Activated naive CD8-positive, alpha-beta T cell treated with anti-CD3 and anti-CD28 coated beads, Interleukin-2, amount 10 ng/mL, durations not matched to agents 7 days and 5 days (primary cell): ENCODE measurements at regions of chr9 and their contacts with region 1.

Region 1: GRCh38 chr9:131277910-131278701 is 1.8 kb upstream of the FAM78A start:
- DNase-seq: peak; percentile 71
- ATAC-seq: peak; percentile 44
- H3K4me3 Mint-ChIP-seq: peak overlapping the region; percentile 83
- H3K27ac Mint-ChIP-seq: peak overlapping the region; percentile 93
- H3K4me1 Mint-ChIP-seq: peaks cover 23% of the 10 kb centered on the region
- H3K27me3 Mint-ChIP-seq: peaks cover 18% of the 10 kb centered on the region

Region 2: DNA sequence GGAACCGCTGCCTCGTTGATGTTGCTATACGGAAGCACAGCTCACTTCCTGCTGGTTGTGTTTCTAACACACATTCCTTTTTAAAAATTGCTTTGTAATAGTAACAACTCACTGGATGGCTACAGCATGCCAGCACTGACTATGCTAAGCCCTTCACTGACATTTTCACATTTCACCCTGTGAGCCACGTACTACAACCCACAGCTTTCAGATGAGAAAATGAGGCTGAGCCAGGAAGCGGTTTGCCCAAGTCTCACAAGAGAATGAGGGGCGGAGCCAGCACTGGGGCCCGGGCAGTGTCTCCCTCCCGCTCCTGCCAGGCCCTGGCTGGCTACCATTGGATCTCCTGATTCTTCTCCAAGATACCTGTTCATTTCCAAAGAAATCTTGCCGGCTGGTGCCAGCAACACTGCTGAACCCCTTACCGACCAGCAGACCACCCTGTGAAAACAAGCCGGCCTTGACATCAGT is 40.1 kb before region 1 on chr9:
- POLR2A ChIA-PET with region 1: interaction called, 110 read pairs
- DNase-seq: peak; percentile 81
- ATAC-seq: peak; percentile 97
- H3K4me3 Mint-ChIP-seq: peak overlapping the region; percentile 79
- H3K27ac Mint-ChIP-seq: peak overlapping the region; percentile 98
- H3K4me1 Mint-ChIP-seq: peaks cover 38% of the 10 kb centered on the region
- H3K27me3 Mint-ChIP-seq: no peaks in the 10 kb centered on the region

Region 3: DNA sequence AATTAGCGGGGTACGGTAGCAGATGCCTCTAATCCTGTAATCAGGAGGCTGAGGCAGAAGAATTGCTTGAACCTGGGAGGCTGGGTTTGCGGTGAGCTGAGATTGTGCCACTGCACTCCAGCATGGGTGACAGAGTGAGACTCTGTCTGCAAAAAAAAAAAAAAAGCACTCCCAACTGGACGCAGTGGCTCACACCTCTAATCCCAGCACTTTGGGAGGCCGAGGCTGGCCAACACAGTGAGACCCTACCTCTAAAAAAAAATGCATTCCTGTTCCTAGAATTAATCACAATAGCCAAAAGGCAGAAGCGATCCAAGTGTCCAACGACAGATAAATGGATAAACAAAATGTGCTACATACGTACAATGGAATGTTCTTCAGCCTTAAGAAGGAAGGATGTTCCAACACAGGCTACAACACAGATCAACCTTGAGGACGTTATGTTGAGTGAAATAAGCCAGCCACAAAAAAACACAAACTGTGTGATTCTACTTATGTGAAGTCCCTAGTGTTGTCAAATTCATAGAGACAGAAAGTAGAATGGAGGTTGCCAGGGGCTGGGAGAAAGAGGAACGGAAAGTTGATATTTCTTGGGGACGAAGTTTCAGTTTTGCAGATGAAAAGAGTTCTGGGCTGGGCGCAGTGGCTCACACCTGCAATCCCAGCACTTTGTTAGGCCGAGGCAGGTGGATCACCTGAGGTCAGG is 15.6 kb before region 1 on chr9:
- POLR2A ChIA-PET with region 1: interaction called, 594 read pairs
- DNase-seq: no peak
- ATAC-seq: no peak
- H3K4me3 Mint-ChIP-seq: peak overlapping the region; percentile 58
- H3K27ac Mint-ChIP-seq: peak overlapping the region; percentile 75
- H3K4me1 Mint-ChIP-seq: peaks cover 54% of the 10 kb centered on the region
- H3K27me3 Mint-ChIP-seq: no peaks in the 10 kb centered on the region

Region 4: GRCh38 chr9:131318231-131319085 is 40.4 kb after region 1 on chr9:
- POLR2A ChIA-PET with region 1: no interaction called
- DNase-seq: no peak
- ATAC-seq: no peak
- H3K4me3 Mint-ChIP-seq: no peak overlapping the region
- H3K27ac Mint-ChIP-seq: no peak overlapping the region
- H3K4me1 Mint-ChIP-seq: no peaks in the 10 kb centered on the region
- H3K27me3 Mint-ChIP-seq: peaks cover 2% of the 10 kb centered on the region